ENCODE measurements at regions of chr13 and their contacts with region 1.

Region 1: DNA sequence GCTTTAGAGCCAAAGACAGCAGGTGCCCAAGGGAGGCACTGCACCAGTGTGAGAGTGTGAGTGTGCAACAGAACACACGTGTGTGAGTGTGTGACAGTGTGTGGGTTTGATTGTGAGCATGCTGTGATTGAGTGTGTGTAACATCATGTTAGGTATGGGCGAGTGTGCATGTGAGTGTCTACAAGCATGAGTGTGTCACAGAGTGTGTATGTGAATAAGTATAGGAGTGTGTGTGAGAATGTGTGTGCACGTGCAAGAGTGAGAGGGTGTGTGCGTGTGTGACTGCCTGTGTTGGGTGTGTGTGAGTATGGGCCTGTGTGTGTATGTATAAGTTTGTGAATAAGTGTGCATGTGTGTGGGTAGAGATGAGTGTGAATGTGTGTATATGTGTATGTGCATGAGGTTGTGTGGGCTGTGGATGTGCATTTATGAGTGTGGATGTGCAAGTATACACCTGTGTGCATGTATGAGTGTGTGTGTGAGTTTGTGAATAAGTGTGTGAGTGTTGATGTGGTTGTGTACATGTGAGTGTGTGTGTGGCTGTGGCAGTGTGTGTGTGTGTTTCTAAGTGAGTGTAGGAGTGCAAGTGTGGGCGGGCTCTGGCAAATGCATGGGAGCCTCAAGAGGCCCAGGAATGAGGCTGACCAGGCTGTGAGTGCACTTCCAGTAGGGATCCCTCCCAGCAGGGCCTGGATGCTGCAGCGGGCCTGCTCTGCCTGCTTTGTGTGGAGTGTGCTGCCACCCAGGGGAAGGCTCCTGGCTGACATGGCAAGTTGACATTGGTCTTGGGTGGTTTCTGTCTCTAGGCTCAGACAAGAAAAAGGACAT is 198.4 kb downstream of the COL4A1 start:
- DNase-seq: peak; percentile 88
- ATAC-seq: peak; percentile 80
- H3K4me3 ChIP-seq: no peak overlapping the region
- H3K27ac ChIP-seq: no peak overlapping the region
- H3K4me1 ChIP-seq: peaks cover 18% of the 10 kb centered on the region
- H3K27me3 ChIP-seq: no peaks in the 10 kb centered on the region
- CTCF ChIP-seq: peak; percentile 91
- POLR2A ChIP-seq: peak; percentile 53; the same call in 1 of the 2 replicates
- RAD21 ChIP-seq: peak; percentile 99

Region 2: DNA sequence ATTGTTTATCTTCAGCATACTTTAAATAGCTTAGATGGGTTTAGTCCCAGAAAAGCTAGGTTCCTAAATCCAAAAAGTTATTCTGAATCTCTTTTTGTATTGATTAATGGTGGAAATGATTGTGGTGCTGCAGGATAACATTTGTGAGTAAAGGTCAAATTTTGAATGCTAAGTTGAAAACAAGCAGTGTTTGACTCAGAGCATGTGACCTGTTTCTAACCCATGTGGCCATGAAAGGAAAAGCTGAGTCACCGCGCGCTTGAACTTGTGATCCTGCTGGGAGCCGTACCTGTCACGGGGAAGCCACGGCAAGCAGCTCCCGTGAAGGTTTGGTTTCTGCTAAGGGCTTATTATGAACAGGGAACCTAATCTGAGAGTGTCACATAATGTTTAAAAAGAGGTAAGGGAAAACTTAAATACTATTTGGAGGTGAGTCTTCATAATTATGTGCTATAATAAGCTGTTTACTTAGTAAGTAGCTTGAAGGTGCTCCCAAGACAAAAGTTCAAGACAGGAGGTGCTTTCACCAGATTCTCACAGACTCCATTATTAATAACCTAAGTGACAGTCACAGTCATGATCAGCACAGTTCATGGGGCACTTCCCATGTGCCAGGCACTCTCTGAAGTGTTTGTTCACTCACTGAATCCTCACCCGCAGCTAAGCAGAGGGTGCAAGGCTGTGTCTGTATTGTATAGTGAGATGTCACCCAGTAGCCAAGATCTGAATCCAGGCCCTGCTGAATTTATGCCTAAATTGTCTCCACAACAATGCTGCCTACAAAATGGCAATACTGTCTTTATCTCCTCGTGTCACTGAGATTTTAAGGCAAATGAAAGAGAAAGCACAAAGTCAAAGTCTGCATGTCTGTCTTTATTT is 1192.7 kb before region 1 on chr13:
- CTCF ChIA-PET with region 1: no interaction called
- POLR2A ChIA-PET with region 1: no interaction called
- dilution Hi-C with region 1: no loop called
- in situ Hi-C with region 1: no loop called
- intact Hi-C with region 1: loop called (anchors 5 kb)
- DNase-seq: peak; percentile 88
- ATAC-seq: peak; percentile 47
- H3K4me3 ChIP-seq: no peak overlapping the region
- H3K27ac ChIP-seq: peak overlapping the region; percentile 12; the same call in 1 of the 2 replicates
- H3K4me1 ChIP-seq: peaks cover 13% of the 10 kb centered on the region
- H3K27me3 ChIP-seq: peaks cover 7% of the 10 kb centered on the region
- CTCF ChIP-seq: no peak
- POLR2A ChIP-seq: no peak
- RAD21 ChIP-seq: no peak

Region 3: DNA sequence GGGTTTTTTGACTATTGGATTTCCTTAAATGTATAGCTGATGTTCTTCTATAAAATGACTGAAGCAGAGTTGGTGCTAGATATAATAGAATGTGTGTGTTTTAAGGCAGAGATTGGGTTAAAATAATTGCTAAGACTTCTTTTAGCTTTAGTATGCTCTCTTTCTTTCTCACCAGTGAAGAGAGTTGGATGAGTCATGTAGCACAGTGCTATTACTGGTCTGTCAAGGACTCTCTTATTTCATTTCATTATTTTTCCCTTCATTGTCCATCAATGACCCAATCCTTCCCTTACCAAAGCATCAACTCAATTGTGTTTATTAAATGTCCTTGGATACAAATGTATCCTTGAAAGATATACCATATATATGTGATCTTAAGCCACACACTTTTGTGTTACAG is 591.0 kb before region 1 on chr13:
- CTCF ChIA-PET with region 1: no interaction called
- POLR2A ChIA-PET with region 1: no interaction called
- dilution Hi-C with region 1: no loop called
- in situ Hi-C with region 1: no loop called
- intact Hi-C with region 1: no loop called
- DNase-seq: no peak
- ATAC-seq: no peak
- H3K4me3 ChIP-seq: no peak overlapping the region
- H3K27ac ChIP-seq: no peak overlapping the region
- H3K4me1 ChIP-seq: no peaks in the 10 kb centered on the region
- H3K27me3 ChIP-seq: peaks cover 6% of the 10 kb centered on the region
- CTCF ChIP-seq: no peak
- POLR2A ChIP-seq: no peak
- RAD21 ChIP-seq: no peak

Region 4: DNA sequence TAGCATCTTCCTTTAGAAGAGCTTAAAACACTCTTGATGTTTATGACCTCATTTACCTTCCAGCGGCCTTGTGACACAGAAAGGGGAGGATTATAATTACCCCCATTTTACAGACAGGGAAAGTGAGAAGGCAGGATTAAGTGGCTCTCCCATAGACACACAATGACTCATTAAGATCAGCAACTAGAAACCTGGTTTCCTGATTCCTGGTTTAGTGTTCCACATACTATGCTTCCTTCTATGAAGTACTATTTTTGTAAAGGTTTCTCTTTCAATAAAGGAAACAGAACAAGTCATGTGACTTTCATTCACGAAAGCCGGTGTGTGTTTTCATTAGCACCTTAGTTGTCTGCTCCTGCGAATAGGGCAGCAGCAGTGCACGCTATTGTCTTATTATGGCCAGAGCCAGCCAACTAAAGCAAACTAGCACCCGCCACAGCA is 330.4 kb before region 1 on chr13:
- CTCF ChIA-PET with region 1: no interaction called
- POLR2A ChIA-PET with region 1: interaction called, 11 read pairs
- dilution Hi-C with region 1: loop called (anchors 25 kb)
- in situ Hi-C with region 1: no loop called
- intact Hi-C with region 1: no loop called
- DNase-seq: peak; percentile 39
- ATAC-seq: no peak
- H3K4me3 ChIP-seq: no peak overlapping the region
- H3K27ac ChIP-seq: no peak overlapping the region
- H3K4me1 ChIP-seq: peaks cover 16% of the 10 kb centered on the region
- H3K27me3 ChIP-seq: no peaks in the 10 kb centered on the region
- CTCF ChIP-seq: no peak
- POLR2A ChIP-seq: no peak
- RAD21 ChIP-seq: no peak

Region 5: DNA sequence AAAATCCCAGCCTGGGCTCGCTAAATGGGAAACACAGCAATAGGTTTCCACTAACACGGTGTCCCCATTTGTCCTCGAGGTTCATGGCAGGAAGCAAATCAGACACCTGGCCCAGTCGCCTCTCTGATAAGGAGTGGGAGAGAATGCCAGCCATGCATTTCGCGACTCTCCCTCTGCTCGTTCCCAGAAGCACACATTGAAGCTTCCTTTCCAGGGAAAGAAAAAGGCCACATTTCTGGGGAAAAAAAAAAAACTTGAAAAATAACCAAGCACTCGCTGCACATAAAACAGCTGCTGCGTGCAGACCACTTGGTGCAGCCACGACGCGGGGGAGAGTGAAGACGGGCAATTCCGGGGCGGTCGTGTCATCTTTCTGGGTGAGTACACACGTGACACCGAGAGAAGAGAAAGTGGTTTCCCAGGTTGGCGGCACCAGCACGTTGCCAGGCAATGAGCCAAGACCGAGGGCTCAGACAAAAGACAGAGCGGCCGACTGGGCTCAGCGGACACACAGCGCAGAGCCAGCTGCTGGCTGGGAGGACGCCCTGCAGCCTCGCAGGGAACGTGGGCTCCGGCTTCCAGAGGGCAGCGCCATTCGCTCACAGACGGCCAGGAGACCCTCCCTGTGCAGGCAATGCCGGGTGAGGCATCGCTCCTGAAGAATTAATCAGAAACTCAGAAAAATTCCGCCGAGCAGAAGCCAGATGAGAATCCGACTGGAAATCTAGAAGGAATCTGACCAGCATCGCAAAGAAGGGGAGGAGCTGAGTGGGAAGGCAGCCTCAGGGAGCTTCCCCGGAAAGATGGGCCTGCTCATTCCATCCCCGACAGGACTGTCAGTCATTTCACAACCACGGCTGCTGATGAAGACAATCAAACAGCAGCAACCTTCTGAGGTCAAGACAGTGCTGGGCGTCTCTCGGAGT is 239.0 kb before region 1 on chr13:
- CTCF ChIA-PET with region 1: interaction called, 7 read pairs
- POLR2A ChIA-PET with region 1: no interaction called
- dilution Hi-C with region 1: no loop called
- in situ Hi-C with region 1: no loop called
- intact Hi-C with region 1: loop called (anchors 1 kb)
- DNase-seq: peak; percentile 44
- ATAC-seq: peak; percentile 79
- H3K4me3 ChIP-seq: peak overlapping the region; percentile 22
- H3K27ac ChIP-seq: no peak overlapping the region; the same call in 1 of the 2 replicates
- H3K4me1 ChIP-seq: peaks cover 3% of the 10 kb centered on the region
- H3K27me3 ChIP-seq: no peaks in the 10 kb centered on the region
- CTCF ChIP-seq: peak; percentile 13; the same call in 1 of the 2 replicates
- POLR2A ChIP-seq: no peak
- RAD21 ChIP-seq: peak; percentile 21

Region 6: GRCh38 chr13:110017379-110017778 is 91.2 kb before region 1 on chr13:
- CTCF ChIA-PET with region 1: no interaction called
- POLR2A ChIA-PET with region 1: no interaction called
- dilution Hi-C with region 1: no loop called
- in situ Hi-C with region 1: no loop called
- intact Hi-C with region 1: loop called (anchors 5 kb)
- DNase-seq: peak; percentile 95
- ATAC-seq: peak; percentile 90
- H3K4me3 ChIP-seq: no peak overlapping the region
- H3K27ac ChIP-seq: peak overlapping the region; percentile 75
- H3K4me1 ChIP-seq: peaks cover 19% of the 10 kb centered on the region
- H3K27me3 ChIP-seq: no peaks in the 10 kb centered on the region
- CTCF ChIP-seq: no peak
- POLR2A ChIP-seq: peak; percentile 59; the same call in 1 of the 2 replicates
- RAD21 ChIP-seq: 0 out of 2 replicates have a peak, but pooled peaks have one; percentile 1

Region 7: GRCh38 chr13:110044551-110045111 is 63.9 kb before region 1 on chr13:
- CTCF ChIA-PET with region 1: no interaction called
- POLR2A ChIA-PET with region 1: no interaction called
- dilution Hi-C with region 1: no loop called
- in situ Hi-C with region 1: no loop called
- intact Hi-C with region 1: no loop called
- DNase-seq: peak; percentile 16
- ATAC-seq: no peak
- H3K4me3 ChIP-seq: no peak overlapping the region
- H3K27ac ChIP-seq: no peak overlapping the region
- H3K4me1 ChIP-seq: peaks cover 16% of the 10 kb centered on the region
- H3K27me3 ChIP-seq: no peaks in the 10 kb centered on the region
- CTCF ChIP-seq: no peak
- POLR2A ChIP-seq: no peak
- RAD21 ChIP-seq: no peak

Region 8: DNA sequence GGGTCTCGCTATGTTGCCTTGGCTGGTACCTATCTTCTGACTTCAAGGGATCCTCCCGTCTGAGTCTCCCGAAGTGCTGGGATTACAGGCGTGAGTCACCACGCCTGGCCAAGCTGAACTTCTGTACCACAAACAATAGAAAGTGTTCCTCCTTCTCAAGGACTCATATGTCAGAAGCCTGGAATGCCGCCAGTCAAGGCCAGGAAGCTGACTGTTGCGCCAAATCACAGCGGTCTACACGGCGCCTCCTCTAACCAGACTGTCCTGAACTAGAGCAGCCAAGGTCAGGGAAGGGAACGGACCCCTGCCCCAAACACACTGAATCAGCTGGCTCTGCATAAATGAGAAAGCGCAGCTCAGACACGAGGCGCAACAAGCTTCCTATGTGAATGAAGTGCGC is 438.4 kb after region 1 on chr13:
- CTCF ChIA-PET with region 1: no interaction called
- POLR2A ChIA-PET with region 1: no interaction called
- dilution Hi-C with region 1: no loop called
- in situ Hi-C with region 1: no loop called
- intact Hi-C with region 1: no loop called
- DNase-seq: peak; percentile 89
- ATAC-seq: peak; percentile 60
- H3K4me3 ChIP-seq: no peak overlapping the region
- H3K27ac ChIP-seq: no peak overlapping the region
- H3K4me1 ChIP-seq: peaks cover 4% of the 10 kb centered on the region
- H3K27me3 ChIP-seq: no peaks in the 10 kb centered on the region
- CTCF ChIP-seq: no peak
- POLR2A ChIP-seq: no peak
- RAD21 ChIP-seq: no peak